HEK293 (cell line): ENCODE measurements at regions of chr6 and their contacts with region 1.

Region 1: GRCh38 chr6:70369332-70369950 is 43.9 kb upstream of the FAM135A start:
- H3K4me3 ChIP-seq: no peak overlapping the region
- H3K27ac ChIP-seq: no peak overlapping the region
- H3K4me1 ChIP-seq: no peaks in the 10 kb centered on the region
- CTCF ChIP-seq: peak; percentile 78

Region 2: GRCh38 chr6:68891419-68891818 is 1478.0 kb before region 1 on chr6:
- CTCF ChIA-PET with region 1: no interaction called
- POLR2A ChIA-PET with region 1: no interaction called
- H3K4me3 ChIP-seq: no peak overlapping the region
- H3K27ac ChIP-seq: no peak overlapping the region
- H3K4me1 ChIP-seq: no peaks in the 10 kb centered on the region
- CTCF ChIP-seq: no peak

Region 3: GRCh38 chr6:70133246-70133645 is 236.2 kb before region 1 on chr6:
- CTCF ChIA-PET with region 1: no interaction called
- POLR2A ChIA-PET with region 1: no interaction called
- H3K4me3 ChIP-seq: no peak overlapping the region
- H3K27ac ChIP-seq: no peak overlapping the region
- H3K4me1 ChIP-seq: no peaks in the 10 kb centered on the region
- CTCF ChIP-seq: no peak

Region 4: GRCh38 chr6:70304616-70305015 is 64.8 kb before region 1 on chr6:
- CTCF ChIA-PET with region 1: interaction called, 368 read pairs
- POLR2A ChIA-PET with region 1: no interaction called
- H3K4me3 ChIP-seq: no peak overlapping the region
- H3K27ac ChIP-seq: no peak overlapping the region
- H3K4me1 ChIP-seq: no peaks in the 10 kb centered on the region
- CTCF ChIP-seq: no peak

Region 5: DNA sequence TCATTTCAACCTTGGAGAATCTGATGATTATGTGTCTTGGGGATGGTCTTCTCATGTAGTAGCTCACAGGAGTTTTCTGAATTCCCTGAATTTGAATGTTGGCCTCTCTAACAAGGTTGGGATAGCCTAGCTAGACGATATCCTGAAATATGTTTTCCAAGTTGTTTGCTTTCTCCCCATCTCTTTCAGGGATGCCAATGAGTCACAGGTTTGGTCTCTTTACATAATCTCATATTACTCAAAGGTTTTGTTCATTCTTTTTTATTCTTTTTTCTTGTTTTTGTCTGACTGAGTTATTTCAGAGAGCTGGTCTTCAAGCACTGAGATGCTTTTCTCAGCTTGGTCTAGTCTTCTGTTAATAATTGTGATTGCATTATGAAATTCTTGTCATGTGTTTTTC is 23.8 kb before region 1 on chr6:
- CTCF ChIA-PET with region 1: interaction called, 11 read pairs
- POLR2A ChIA-PET with region 1: no interaction called
- H3K4me3 ChIP-seq: no peak overlapping the region
- H3K27ac ChIP-seq: no peak overlapping the region
- H3K4me1 ChIP-seq: no peaks in the 10 kb centered on the region
- CTCF ChIP-seq: no peak

Region 6: GRCh38 chr6:70385901-70386300 is 16.5 kb after region 1 on chr6:
- CTCF ChIA-PET with region 1: interaction called, 36 read pairs
- POLR2A ChIA-PET with region 1: no interaction called
- H3K4me3 ChIP-seq: no peak overlapping the region
- H3K27ac ChIP-seq: no peak overlapping the region
- H3K4me1 ChIP-seq: no peaks in the 10 kb centered on the region; the same call in 1 of the 2 replicates
- CTCF ChIP-seq: no peak

Region 7: DNA sequence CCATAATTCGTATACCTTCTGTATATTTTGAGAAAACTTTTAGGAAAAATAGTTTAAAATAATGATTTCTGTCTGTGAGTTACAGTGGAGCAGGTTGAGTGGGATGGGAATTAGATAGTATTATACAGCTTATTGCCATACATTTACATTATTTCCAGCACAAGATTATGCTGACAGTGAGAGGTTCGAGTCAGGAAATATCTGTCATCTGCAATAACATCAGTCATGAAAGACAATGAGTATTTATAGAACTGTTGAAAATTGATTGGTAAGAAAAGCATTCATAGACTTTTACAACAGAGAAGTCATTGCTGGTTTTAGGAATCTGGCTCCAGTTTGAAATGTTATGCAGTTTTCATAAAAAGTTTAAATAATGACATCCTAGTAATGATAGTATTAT is 89.8 kb after region 1 on chr6:
- CTCF ChIA-PET with region 1: interaction called, 10 read pairs
- POLR2A ChIA-PET with region 1: no interaction called
- H3K4me3 ChIP-seq: no peak overlapping the region
- H3K27ac ChIP-seq: no peak overlapping the region
- H3K4me1 ChIP-seq: no peaks in the 10 kb centered on the region
- CTCF ChIP-seq: no peak